ENCODE measurements at regions of chr9 and their contacts with region 1.

Region 1: DNA sequence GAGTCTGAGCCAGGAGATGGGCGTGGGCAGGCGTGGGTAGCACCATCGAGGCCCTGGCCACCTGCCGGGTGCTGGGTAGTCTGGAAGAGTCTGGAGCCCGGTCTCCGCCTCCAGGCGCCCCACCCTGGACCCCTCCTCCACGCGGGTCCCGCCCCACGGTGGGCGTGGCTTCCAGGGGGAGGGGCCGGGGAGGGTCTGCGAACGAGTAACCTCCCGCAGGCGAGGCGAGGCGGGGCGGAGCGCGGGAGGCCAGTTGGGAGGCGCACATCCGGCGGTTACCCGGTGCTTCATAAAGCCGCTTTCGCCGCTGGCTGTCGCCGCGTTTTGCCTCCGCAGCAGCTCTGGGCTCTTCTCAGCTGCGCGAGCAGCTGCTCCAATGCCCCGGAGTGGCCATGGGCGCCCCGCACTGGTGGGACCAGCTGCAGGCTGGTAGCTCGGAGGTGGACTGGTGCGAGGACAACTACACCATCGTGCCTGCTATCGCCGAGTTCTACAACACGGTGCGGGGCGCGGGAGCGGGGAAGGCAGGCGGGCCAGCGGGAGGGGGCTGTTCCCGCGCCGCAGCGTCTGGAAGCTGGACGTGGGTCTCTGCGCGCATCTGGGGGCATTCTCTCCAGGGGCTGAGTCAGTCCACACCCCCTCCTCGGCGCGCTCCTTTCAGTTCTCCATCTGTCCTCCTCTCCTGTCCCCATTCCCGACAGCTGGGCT is at the start of gene ACER2:
- DNase-seq: peak; percentile 91 to 99 (median 95)
- ATAC-seq: peak; percentile 99
- H3K4me3 ChIP-seq: peak within 1 kb of the TSS; percentile 96
- H3K4me3 Mint-ChIP-seq: peak within 1 kb of the TSS; percentile 92 to 99 (median 94)
- H3K27ac ChIP-seq: peak within 1 kb of the TSS; percentile 72
- H3K27ac Mint-ChIP-seq: peak within 1 kb of the TSS; percentile 74 to 94 (median 82)
- H3K4me1 ChIP-seq: peaks cover 0 to 6% of the 10 kb centered on the region in 2 donors
- H3K4me1 Mint-ChIP-seq: peaks cover 8 to 30% (median 19%) of the 10 kb centered on the region in 7 donors
- H3K27me3 ChIP-seq: no peaks in the 10 kb centered on the region
- H3K27me3 Mint-ChIP-seq: peaks cover 0 to 9% (median 0%) of the 10 kb centered on the region in 5 donors
- total RNA-seq, gene ACER2: 2.0 to 5.7 (median 2.8) TPM

Region 2: GRCh38 chr9:18791074-18791473 is 617.8 kb before region 1 on chr9:
- CTCF ChIA-PET with region 1: no interaction called
- POLR2A ChIA-PET with region 1: no interaction called
- intact Hi-C with region 1: no loop called
- DNase-seq: no peak
- ATAC-seq: no peak
- H3K4me3 ChIP-seq: no peak overlapping the region
- H3K4me3 Mint-ChIP-seq: no peak overlapping the region
- H3K27ac ChIP-seq: no peak overlapping the region
- H3K27ac Mint-ChIP-seq: no peak overlapping the region
- H3K4me1 ChIP-seq: no peaks in the 10 kb centered on the region
- H3K4me1 Mint-ChIP-seq: no peaks in the 10 kb centered on the region
- H3K27me3 ChIP-seq: no peaks in the 10 kb centered on the region
- H3K27me3 Mint-ChIP-seq: peaks cover 0 to 11% (median 0%) of the 10 kb centered on the region in 5 donors

Region 3: DNA sequence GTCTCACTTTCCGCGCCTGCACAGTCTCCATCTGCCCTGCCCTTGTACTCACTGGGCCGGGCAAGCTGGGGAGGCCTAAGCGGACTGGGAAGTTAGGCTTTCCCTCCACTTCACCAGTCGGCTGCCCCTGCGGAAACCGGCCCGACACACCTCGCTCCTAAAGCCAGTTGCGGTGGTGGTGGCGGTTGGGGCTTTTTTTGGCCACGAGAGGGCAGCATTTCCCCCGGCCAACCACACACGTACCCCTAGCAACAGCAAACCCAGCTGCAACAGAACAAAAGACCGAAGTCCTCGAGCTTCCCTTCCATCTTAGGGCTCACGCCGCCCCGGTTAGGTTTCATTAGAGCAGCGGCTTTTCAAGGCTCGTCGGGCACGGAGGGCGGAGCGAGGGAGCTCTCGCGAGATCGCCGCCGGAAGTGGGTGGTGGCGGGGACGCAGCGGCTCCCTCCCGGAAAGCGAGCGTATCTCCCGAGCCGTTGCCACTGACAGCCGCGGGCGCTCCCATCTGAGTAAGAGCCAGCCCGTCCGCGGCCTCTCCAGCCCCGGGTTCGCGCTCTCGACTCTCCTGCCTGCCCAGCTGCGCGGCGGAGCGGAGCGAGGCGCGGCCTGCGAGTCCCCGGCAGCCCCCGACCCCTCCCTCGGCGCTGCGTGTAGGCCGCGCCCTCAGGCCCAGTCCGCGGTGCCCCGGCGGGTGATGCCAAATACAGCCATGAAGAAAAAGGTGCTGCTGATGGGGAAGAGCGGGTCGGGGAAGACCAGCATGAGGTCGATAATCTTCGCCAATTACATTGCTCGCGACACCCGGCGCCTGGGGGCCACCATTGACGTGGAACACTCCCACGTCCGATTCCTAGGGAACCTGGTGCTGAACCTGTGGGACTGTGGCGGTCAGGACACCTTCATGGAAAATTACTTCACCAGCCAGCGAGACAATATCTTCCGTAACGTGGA is 359.6 kb before region 1 on chr9 and contains the start of gene RRAGA:
- CTCF ChIA-PET with region 1: no interaction called
- POLR2A ChIA-PET with region 1: no interaction called
- intact Hi-C with region 1: loop called (anchors 1 kb)
- DNase-seq: peak; percentile 90 to 96 (median 95)
- ATAC-seq: peak; percentile 95
- H3K4me3 ChIP-seq: peak within 1 kb of the TSS; percentile 88
- H3K4me3 Mint-ChIP-seq: peak within 1 kb of the TSS; percentile 92 to 99 (median 95)
- H3K27ac ChIP-seq: peak within 1 kb of the TSS; percentile 85
- H3K27ac Mint-ChIP-seq: peak within 1 kb of the TSS; percentile 97 to 100 (median 98)
- H3K4me1 ChIP-seq: peaks cover 20% of the 10 kb centered on the region in 2 donors
- H3K4me1 Mint-ChIP-seq: peaks cover 6 to 50% (median 42%) of the 10 kb centered on the region in 7 donors
- H3K27me3 ChIP-seq: no peaks in the 10 kb centered on the region
- H3K27me3 Mint-ChIP-seq: peaks cover 0 to 2% (median 0%) of the 10 kb centered on the region in 5 donors
- total RNA-seq, gene RRAGA: 25.9 to 53.6 (median 51.9) TPM

Region 4: GRCh38 chr9:19161257-19162025 is 247.4 kb before region 1 on chr9:
- CTCF ChIA-PET with region 1: no interaction called
- POLR2A ChIA-PET with region 1: no interaction called
- intact Hi-C with region 1: loop called in 1 of 2 experiments (anchors 1 kb)
- DNase-seq: peak in 8 of 9 donors; percentile 25 to 63 (median 37)
- ATAC-seq: peak; percentile 94
- H3K4me3 ChIP-seq: no peak overlapping the region
- H3K4me3 Mint-ChIP-seq: peak overlapping the region; percentile 26 to 77 (median 53)
- H3K27ac ChIP-seq: peak overlapping the region; percentile 12
- H3K27ac Mint-ChIP-seq: peak overlapping the region; percentile 72 to 96 (median 81)
- H3K4me1 ChIP-seq: peaks cover 6 to 12% of the 10 kb centered on the region in 2 donors
- H3K4me1 Mint-ChIP-seq: peaks cover 12 to 27% (median 19%) of the 10 kb centered on the region in 7 donors
- H3K27me3 ChIP-seq: no peaks in the 10 kb centered on the region
- H3K27me3 Mint-ChIP-seq: no peaks in the 10 kb centered on the region

Region 5: GRCh38 chr9:19358701-19359100 is 50.1 kb before region 1 on chr9:
- CTCF ChIA-PET with region 1: no interaction called
- POLR2A ChIA-PET with region 1: no interaction called
- intact Hi-C with region 1: no loop called
- DNase-seq: no peak
- ATAC-seq: no peak
- H3K4me3 ChIP-seq: no peak overlapping the region
- H3K4me3 Mint-ChIP-seq: no peak overlapping the region
- H3K27ac ChIP-seq: no peak overlapping the region
- H3K27ac Mint-ChIP-seq: peak overlapping the region in 2 of 9 donors; percentile 7 to 59
- H3K4me1 ChIP-seq: no peaks in the 10 kb centered on the region
- H3K4me1 Mint-ChIP-seq: no peaks in the 10 kb centered on the region
- H3K27me3 ChIP-seq: no peaks in the 10 kb centered on the region
- H3K27me3 Mint-ChIP-seq: no peaks in the 10 kb centered on the region

Region 6: GRCh38 chr9:19379697-19380046 is 29.2 kb before region 1 on chr9:
- CTCF ChIA-PET with region 1: no interaction called
- POLR2A ChIA-PET with region 1: interaction called, 21 read pairs
- intact Hi-C with region 1: loop called (anchors 1 kb)
- DNase-seq: peak in 1 of 9 donors; percentile 39
- ATAC-seq: peak; percentile 59
- H3K4me3 ChIP-seq: peak overlapping the region; percentile 89
- H3K4me3 Mint-ChIP-seq: peak overlapping the region; percentile 92 to 99 (median 98)
- H3K27ac ChIP-seq: peak overlapping the region; percentile 84
- H3K27ac Mint-ChIP-seq: peak overlapping the region; percentile 97 to 100 (median 99)
- H3K4me1 ChIP-seq: peaks cover 13 to 24% of the 10 kb centered on the region in 2 donors
- H3K4me1 Mint-ChIP-seq: peaks cover 29 to 50% (median 41%) of the 10 kb centered on the region in 7 donors
- H3K27me3 ChIP-seq: no peaks in the 10 kb centered on the region
- H3K27me3 Mint-ChIP-seq: no peaks in the 10 kb centered on the region

Region 7: GRCh38 chr9:19464764-19465585 is 56.1 kb after region 1 on chr9:
- CTCF ChIA-PET with region 1: no interaction called
- POLR2A ChIA-PET with region 1: no interaction called
- intact Hi-C with region 1: loop called in 1 of 2 experiments (anchors 2 kb)
- DNase-seq: peak; percentile 48 to 82 (median 73)
- ATAC-seq: peak; percentile 94
- H3K4me3 ChIP-seq: peak overlapping the region; percentile 24
- H3K4me3 Mint-ChIP-seq: peak overlapping the region; percentile 71 to 97 (median 91)
- H3K27ac ChIP-seq: no peak overlapping the region
- H3K27ac Mint-ChIP-seq: peak overlapping the region in 6 of 9 donors; percentile 28 to 87 (median 70)
- H3K4me1 ChIP-seq: peaks cover 0 to 3% of the 10 kb centered on the region in 2 donors
- H3K4me1 Mint-ChIP-seq: peaks cover 4 to 17% (median 8%) of the 10 kb centered on the region in 7 donors
- H3K27me3 ChIP-seq: no peaks in the 10 kb centered on the region
- H3K27me3 Mint-ChIP-seq: peaks cover 0 to 4% (median 0%) of the 10 kb centered on the region in 5 donors

Region 8: GRCh38 chr9:20921362-20921761 is 1512.5 kb after region 1 on chr9:
- CTCF ChIA-PET with region 1: no interaction called
- POLR2A ChIA-PET with region 1: no interaction called
- intact Hi-C with region 1: no loop called
- DNase-seq: no peak
- ATAC-seq: no peak
- H3K4me3 ChIP-seq: no peak overlapping the region
- H3K4me3 Mint-ChIP-seq: no peak overlapping the region
- H3K27ac ChIP-seq: no peak overlapping the region
- H3K27ac Mint-ChIP-seq: no peak overlapping the region
- H3K4me1 ChIP-seq: no peaks in the 10 kb centered on the region
- H3K4me1 Mint-ChIP-seq: peaks cover 0 to 13% (median 0%) of the 10 kb centered on the region in 7 donors
- H3K27me3 ChIP-seq: no peaks in the 10 kb centered on the region
- H3K27me3 Mint-ChIP-seq: no peaks in the 10 kb centered on the region

Measured in naive thymus-derived CD4-positive, alpha-beta T cell (primary cell).